B cell (primary cell): ENCODE measurements at regions of chr16 and their contacts with region 1.

Region 1: GRCh38 chr16:67246934-67247697 is at the start of gene FHOD1:
- DNase-seq: peak; percentile 96
- ATAC-seq: peak; percentile 75
- H3K4me3 ChIP-seq: peak within 1 kb of the TSS; percentile 70 to 97 (median 79)
- H3K4me3 Mint-ChIP-seq: peak within 1 kb of the TSS; percentile 96
- H3K27ac ChIP-seq: peak within 1 kb of the TSS; percentile 16 to 48
- H3K27ac Mint-ChIP-seq: peak within 1 kb of the TSS; percentile 90
- H3K4me1 ChIP-seq: peaks cover 46 to 55% of the 10 kb centered on the region in 2 donors
- H3K4me1 Mint-ChIP-seq: peaks cover 53% of the 10 kb centered on the region
- H3K27me3 ChIP-seq: peaks cover 0 to 17% (median 12%) of the 10 kb centered on the region in 4 experiments
- H3K27me3 Mint-ChIP-seq: peaks cover 9% of the 10 kb centered on the region
- CTCF ChIP-seq: no peak
- total RNA-seq, gene FHOD1: 46.9 and 47.3 TPM in 2 replicates

Region 2: DNA sequence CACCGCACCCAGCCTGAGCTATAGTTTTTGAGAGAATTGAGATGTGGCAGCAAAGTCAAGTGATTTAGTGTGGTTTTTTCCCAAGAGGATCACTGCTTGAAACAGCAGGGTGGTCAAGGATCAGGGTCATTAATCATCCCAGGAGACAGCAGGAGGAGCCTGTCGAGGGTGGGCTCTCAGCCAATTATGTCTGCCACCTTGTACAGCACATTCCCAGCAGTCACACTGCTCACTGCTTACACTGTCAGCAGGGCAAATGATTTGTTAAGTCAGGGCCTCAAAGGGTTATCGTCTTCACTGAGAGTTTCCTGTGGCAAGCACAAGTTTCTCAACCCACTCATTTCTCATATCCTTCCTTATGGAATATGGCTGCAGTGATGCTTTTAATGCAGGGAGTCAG is 109.5 kb before region 1 on chr16:
- CTCF ChIA-PET with region 1: no interaction called
- POLR2A ChIA-PET with region 1: no interaction called
- intact Hi-C with region 1: no loop called
- DNase-seq: no peak
- ATAC-seq: no peak
- H3K4me3 ChIP-seq: no peak overlapping the region
- H3K4me3 Mint-ChIP-seq: no peak overlapping the region
- H3K27ac ChIP-seq: no peak overlapping the region
- H3K27ac Mint-ChIP-seq: no peak overlapping the region
- H3K4me1 ChIP-seq: no peaks in the 10 kb centered on the region
- H3K4me1 Mint-ChIP-seq: no peaks in the 10 kb centered on the region
- H3K27me3 ChIP-seq: no peaks in the 10 kb centered on the region
- H3K27me3 Mint-ChIP-seq: no peaks in the 10 kb centered on the region
- CTCF ChIP-seq: no peak

Region 3: DNA sequence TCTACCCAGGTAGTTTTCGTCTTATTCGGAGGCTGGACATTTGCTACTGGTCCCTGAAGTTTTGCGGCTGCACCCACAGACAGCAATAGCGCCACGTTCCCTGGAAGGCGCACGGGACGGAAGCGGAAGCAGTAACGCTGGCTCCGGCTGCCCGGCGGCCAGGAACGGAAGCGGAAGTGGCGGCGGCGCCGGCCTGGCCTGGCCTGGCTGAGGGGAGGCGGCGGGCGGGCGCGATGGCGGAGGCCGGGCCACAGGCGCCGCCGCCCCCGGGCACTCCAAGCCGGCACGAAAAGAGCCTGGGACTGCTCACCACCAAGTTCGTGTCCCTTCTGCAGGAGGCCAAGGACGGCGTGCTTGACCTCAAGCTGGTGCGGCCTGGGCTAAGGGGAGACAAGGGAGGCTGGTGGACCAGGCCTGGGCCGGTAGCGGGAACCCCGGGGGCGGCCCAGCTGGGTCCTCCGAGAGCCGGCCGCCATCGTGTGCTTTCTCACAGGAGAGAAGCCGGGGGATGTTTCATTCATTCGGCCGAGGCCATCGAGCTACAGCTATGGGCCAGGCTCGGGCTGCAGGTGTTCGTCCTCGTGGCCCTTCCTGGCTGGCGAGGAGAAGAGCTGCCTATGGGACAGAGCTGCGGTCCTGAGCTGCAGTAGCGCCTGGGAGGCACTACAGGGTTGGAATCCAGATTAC is 55.0 kb before region 1 on chr16 and contains the start of gene E2F4:
- CTCF ChIA-PET with region 1: no interaction called
- POLR2A ChIA-PET with region 1: no interaction called
- intact Hi-C with region 1: loop called (anchors 1 kb)
- DNase-seq: peak; percentile 93
- ATAC-seq: peak; percentile 96
- H3K4me3 ChIP-seq: peak within 1 kb of the TSS; percentile 54 to 98 (median 97)
- H3K4me3 Mint-ChIP-seq: peak within 1 kb of the TSS; percentile 92
- H3K27ac ChIP-seq: peak within 1 kb of the TSS; percentile 52 to 93
- H3K27ac Mint-ChIP-seq: peak within 1 kb of the TSS; percentile 92
- H3K4me1 ChIP-seq: peaks cover 22 to 28% of the 10 kb centered on the region in 2 donors
- H3K4me1 Mint-ChIP-seq: peaks cover 34% of the 10 kb centered on the region
- H3K27me3 ChIP-seq: peaks cover 0 to 17% (median under 1%) of the 10 kb centered on the region in 4 experiments
- H3K27me3 Mint-ChIP-seq: peaks cover 2% of the 10 kb centered on the region
- CTCF ChIP-seq: no peak
- total RNA-seq, gene E2F4: 104 and 106 TPM in 2 replicates

Region 4: DNA sequence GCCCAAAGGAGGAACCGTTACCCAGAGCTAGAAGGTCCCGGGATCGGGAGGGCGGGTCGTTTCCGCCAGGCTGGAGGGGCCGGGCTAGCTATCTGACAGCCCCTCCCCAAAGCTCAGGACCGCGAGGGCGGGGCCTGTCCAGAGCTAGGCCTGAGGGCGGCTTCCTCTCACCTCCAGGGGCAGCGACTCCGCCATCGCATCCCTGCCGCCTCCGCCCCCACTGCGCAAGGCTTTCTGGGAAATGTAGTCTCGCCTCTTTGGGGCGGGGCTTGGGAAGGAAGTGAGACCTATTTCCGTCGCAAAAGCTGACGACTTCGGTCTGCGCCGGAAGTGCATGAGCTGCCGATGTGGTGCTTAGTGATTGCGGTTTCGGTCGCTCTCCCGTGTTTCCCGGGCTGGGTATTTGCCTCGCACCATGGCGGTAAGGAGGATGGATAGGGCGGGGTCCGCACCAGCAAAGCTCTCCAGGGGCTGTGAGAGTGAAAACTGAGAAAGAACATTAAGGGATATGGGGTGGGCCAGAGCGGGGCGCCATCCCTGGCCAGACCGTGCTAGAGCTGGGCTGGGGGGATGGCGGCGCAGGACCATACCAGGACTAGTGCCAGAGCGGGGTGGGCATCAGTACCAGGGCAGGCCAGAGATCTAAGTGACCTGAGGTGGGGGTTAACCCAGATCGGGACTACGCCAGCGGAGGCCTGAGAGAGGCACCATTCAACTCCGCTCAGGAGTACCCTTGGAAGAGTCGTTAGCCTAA is 20.1 kb before region 1 on chr16 and contains the start of gene TMEM208:
- CTCF ChIA-PET with region 1: interaction called, 33 read pairs
- POLR2A ChIA-PET with region 1: interaction called, 30 read pairs
- intact Hi-C with region 1: loop called (anchors 1 kb)
- DNase-seq: peak; percentile 99
- ATAC-seq: peak; percentile 99
- H3K4me3 ChIP-seq: peak within 1 kb of the TSS; percentile 77 to 99 (median 86)
- H3K4me3 Mint-ChIP-seq: peak within 1 kb of the TSS; percentile 100
- H3K27ac ChIP-seq: peak within 1 kb of the TSS; percentile 52 to 82
- H3K27ac Mint-ChIP-seq: peak within 1 kb of the TSS; percentile 100
- H3K4me1 ChIP-seq: peaks cover 15 to 22% of the 10 kb centered on the region in 2 donors
- H3K4me1 Mint-ChIP-seq: peaks cover 29% of the 10 kb centered on the region
- H3K27me3 ChIP-seq: no peaks in the 10 kb centered on the region
- H3K27me3 Mint-ChIP-seq: no peaks in the 10 kb centered on the region
- CTCF ChIP-seq: peak; percentile 13
- total RNA-seq, gene TMEM208: 36.3 and 40.4 TPM in 2 replicates

Region 5: DNA sequence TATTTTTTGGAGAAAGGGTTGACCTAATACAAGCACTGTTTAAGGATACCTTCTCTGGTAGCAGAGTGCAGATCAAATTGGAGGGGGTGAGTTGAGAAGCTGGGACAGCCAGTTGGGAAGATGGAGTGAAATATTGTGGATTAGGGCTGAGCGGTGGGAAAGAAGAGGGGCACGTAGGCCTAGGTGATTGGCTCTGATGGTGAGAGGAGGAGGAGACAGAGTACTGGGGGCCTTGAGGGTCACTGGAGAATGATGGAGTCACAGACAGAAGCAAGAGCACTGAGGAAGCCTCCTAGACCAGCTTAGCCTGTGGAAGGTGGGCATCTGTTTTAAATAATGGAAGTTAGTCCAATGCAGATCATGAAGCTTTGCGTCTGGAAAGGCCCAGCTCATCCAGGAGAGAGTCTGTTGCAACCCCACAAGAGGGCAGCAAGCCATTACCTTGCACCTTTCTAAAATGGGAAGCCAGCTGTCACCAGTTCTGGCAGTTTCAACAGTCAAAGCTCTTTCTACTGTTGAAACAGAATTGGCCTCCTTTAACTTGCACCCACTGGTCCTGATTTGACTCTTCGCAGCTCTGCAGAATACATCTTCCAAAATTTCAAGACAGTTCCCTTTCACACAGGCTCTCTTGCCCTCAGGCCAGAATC is 13.4 kb after region 1 on chr16:
- CTCF ChIA-PET with region 1: interaction called, 19 read pairs
- POLR2A ChIA-PET with region 1: no interaction called
- intact Hi-C with region 1: no loop called
- DNase-seq: peak; percentile 49
- ATAC-seq: peak; percentile 47
- H3K4me3 ChIP-seq: no peak overlapping the region
- H3K4me3 Mint-ChIP-seq: no peak overlapping the region
- H3K27ac ChIP-seq: no peak overlapping the region
- H3K27ac Mint-ChIP-seq: no peak overlapping the region
- H3K4me1 ChIP-seq: no peaks in the 10 kb centered on the region
- H3K4me1 Mint-ChIP-seq: no peaks in the 10 kb centered on the region
- H3K27me3 ChIP-seq: peaks cover 0 to 2% (median 0%) of the 10 kb centered on the region in 4 experiments
- H3K27me3 Mint-ChIP-seq: peaks cover 12% of the 10 kb centered on the region
- CTCF ChIP-seq: no peak

Region 6: DNA sequence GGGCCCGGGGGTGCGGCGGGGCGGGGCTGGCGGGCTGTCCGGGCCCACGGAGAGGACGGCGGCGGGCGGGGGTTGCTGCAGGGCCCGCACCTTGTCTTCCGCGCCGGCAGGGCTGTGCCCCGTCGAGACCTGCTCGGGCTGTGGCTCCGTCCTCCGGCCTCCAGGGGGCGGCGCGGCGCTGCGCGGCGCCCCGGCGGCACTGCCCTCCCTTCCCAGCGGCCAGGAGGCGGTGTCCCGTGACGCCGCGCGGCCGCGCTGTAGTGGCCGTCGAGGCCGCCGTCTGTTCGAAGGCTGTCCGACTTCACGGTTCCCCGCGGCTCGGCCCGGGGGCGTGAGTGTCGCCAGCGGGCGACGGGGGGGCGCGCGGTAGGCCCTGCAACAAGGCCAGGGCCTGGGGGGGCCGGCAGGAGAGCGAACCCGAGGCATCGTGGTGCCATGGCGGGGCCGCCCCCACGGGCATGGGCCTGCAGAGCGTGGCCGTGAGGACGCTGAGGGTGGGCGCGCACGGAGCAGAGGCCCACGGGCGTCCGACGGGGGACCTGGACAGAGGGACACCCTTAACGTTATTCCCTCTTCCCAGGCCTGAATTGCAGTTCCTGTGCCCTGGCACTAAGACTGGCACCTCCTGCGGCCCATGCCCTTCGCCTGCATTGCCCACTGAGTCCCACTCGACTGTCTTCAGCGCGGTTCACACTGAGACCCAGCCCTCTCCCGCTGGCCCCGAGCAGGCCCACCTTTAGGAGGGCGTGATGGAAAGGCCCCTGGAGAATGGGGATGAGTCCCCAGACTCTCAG is 32.4 kb after region 1 on chr16 and contains the start of gene PLEKHG4:
- CTCF ChIA-PET with region 1: interaction called, 3 read pairs
- POLR2A ChIA-PET with region 1: no interaction called
- intact Hi-C with region 1: loop called (anchors 2 kb)
- DNase-seq: peak; percentile 84
- ATAC-seq: peak; percentile 96
- H3K4me3 ChIP-seq: peak within 1 kb of the TSS in 4 of 5 experiments; percentile 51 to 72 (median 58)
- H3K4me3 Mint-ChIP-seq: peak within 1 kb of the TSS; percentile 85
- H3K27ac ChIP-seq: peak within 1 kb of the TSS in 1 of 2 donors; percentile 28
- H3K27ac Mint-ChIP-seq: peak within 1 kb of the TSS; percentile 56
- H3K4me1 ChIP-seq: peaks cover 7 to 11% of the 10 kb centered on the region in 2 donors
- H3K4me1 Mint-ChIP-seq: peaks cover 6% of the 10 kb centered on the region
- H3K27me3 ChIP-seq: no peaks in the 10 kb centered on the region
- H3K27me3 Mint-ChIP-seq: no peaks in the 10 kb centered on the region
- CTCF ChIP-seq: peak; percentile 81
- total RNA-seq, gene PLEKHG4: 6.0 and 6.7 TPM in 2 replicates

Region 7: GRCh38 chr16:67667817-67668494 is 420.8 kb after region 1 on chr16:
- CTCF ChIA-PET with region 1: no interaction called
- POLR2A ChIA-PET with region 1: no interaction called
- intact Hi-C with region 1: loop called (anchors 10 kb)
- DNase-seq: peak; percentile 89
- ATAC-seq: peak; percentile 81
- H3K4me3 ChIP-seq: peak overlapping the region in 4 of 5 experiments; percentile 67 to 91 (median 80)
- H3K4me3 Mint-ChIP-seq: peak overlapping the region; percentile 91
- H3K27ac ChIP-seq: peak overlapping the region; percentile 77 to 86
- H3K27ac Mint-ChIP-seq: peak overlapping the region; percentile 84
- H3K4me1 ChIP-seq: peaks cover 36 to 49% of the 10 kb centered on the region in 2 donors
- H3K4me1 Mint-ChIP-seq: peaks cover 49% of the 10 kb centered on the region
- H3K27me3 ChIP-seq: no peaks in the 10 kb centered on the region
- H3K27me3 Mint-ChIP-seq: no peaks in the 10 kb centered on the region
- CTCF ChIP-seq: peak; percentile 75